Stomach (tissue), 19 donors: ENCODE measurements at regions of chr11 and their contacts with region 1.

Region 1: GRCh38 chr11:114257621-114258558 is 38.3 kb upstream of the NNMT start:
- DNase-seq: peak in 1 of 2 donors; percentile 79
- H3K4me3 ChIP-seq: peak overlapping the region in 3 of 4 donors; percentile 0 to 11 (median 7)
- H3K27ac ChIP-seq: peak overlapping the region in 4 of 5 donors; percentile 65 to 84 (median 70)
- H3K4me1 ChIP-seq: peaks cover 37 to 65% (median 56%) of the 10 kb centered on the region in 4 donors
- H3K27me3 ChIP-seq: no peaks in the 10 kb centered on the region
- CTCF ChIP-seq: peak in 1 of 7 experiments; percentile 13
- EP300 ChIP-seq: no peak
- POLR2A ChIP-seq: no peak

Region 2: DNA sequence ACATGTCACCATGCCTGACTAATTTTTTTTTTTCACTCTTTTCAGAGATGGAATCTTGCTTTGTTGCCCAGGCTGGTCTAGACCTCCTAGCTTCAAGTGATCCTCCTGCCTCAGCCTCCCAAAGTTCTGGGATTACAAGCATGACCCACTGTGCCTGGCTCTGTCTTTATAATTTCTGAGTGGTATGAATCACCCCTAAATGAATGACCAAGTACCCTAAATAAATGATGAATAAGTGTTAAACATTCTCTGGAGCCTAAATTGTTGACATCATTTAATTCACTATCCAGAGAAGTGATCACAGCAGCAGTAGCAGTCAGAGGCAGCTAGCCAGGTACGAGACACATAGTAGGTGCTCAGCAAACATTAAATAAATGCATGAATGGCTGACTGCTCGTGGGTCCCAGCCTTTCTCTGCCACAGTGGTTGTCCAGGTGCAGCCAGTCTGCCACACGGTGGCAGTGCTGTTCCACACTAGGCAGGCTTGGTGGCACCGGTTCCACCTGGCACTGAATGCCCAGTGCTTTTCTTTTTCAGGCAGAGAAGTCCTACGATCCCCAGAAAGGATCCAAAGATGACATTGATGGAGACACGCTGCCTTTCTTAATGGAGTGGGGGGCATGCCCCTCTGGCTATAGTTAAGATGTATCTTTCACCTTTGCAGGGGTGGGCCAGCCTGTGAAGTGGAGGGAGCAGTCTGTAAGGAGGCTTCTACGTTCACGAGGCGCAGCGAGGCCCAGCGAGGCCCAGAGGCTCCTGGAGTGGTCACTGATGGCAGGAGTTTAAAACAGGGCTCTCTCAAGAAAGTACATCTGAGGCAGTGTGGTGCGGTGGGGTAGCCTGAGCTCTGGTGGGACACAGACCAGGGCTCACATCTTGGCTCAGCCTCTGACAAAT is 952.2 kb before region 1 on chr11:
- intact Hi-C with region 1: no loop called
- DNase-seq: peak; percentile 83 to 90
- H3K4me3 ChIP-seq: no peak overlapping the region
- H3K27ac ChIP-seq: no peak overlapping the region
- H3K4me1 ChIP-seq: peaks cover 0 to 4% (median 0%) of the 10 kb centered on the region in 4 donors
- H3K27me3 ChIP-seq: no peaks in the 10 kb centered on the region
- CTCF ChIP-seq: peak in 5 of 7 experiments; percentile 79 to 88 (median 85)
- EP300 ChIP-seq: no peak
- POLR2A ChIP-seq: no peak

Region 3: DNA sequence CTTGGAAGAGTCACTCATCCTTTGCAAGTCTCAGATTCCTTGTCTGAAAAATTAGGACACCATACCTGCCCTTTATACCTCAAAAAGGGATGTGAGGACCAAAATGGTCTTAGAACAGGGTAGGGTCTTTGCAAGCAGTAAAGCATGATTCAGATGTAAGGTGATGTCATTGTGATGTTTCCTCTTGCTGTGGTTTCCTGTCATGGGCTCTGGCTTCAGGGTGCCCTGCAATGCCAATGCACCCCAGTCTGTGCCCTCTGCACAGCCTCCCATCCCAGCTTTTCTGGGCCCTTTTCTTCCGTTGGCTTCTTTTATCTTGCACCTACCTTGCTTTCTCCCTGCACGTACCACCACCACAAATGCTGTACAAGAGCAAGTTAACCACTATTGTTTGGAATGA is 49.5 kb before region 1 on chr11:
- intact Hi-C with region 1: loop called (anchors 10 kb)
- DNase-seq: no peak
- H3K4me3 ChIP-seq: no peak overlapping the region
- H3K27ac ChIP-seq: peak overlapping the region in 1 of 5 donors; percentile 7
- H3K4me1 ChIP-seq: peaks cover 4 to 58% (median 32%) of the 10 kb centered on the region in 4 donors
- H3K27me3 ChIP-seq: no peaks in the 10 kb centered on the region
- CTCF ChIP-seq: no peak
- EP300 ChIP-seq: no peak
- POLR2A ChIP-seq: no peak